ENCODE measurements at regions of chr2 and their contacts with region 1.

Region 1: DNA sequence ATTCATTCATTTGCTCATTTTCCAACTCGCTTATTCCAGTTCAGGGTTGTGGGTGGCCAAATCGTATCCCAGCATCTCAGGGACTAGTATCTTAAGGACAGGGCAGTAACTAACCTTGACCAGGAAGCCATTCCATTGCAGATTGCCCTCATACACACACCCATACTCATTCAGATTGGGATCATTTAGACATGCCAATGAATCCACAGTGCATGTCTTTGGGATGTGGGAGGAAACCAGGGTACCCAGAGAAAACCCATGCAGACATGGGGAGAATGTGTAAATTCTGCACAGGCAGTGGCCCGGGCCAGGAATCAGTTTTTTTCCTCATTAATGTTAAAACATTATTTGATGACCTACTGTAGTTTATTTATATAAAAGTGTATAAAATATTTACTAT is 150.7 kb downstream of the USP34 start:
- DNase-seq: no peak
- H3K4me3 ChIP-seq: no peak overlapping the region
- H3K27ac ChIP-seq: no peak overlapping the region
- H3K4me1 ChIP-seq: no peaks in the 10 kb centered on the region
- CTCF ChIP-seq: no peak

Region 2: GRCh38 chr2:61220768-61221167 is 99.4 kb before region 1 on chr2:
- CTCF ChIA-PET with region 1: no interaction called
- POLR2A ChIA-PET with region 1: interaction called, 6 read pairs
- intact Hi-C with region 1: loop called (anchors 5 kb)
- DNase-seq: no peak
- H3K4me3 ChIP-seq: no peak overlapping the region
- H3K27ac ChIP-seq: no peak overlapping the region
- H3K4me1 ChIP-seq: no peaks in the 10 kb centered on the region
- CTCF ChIP-seq: no peak

Region 3: GRCh38 chr2:61255580-61256437 is 64.4 kb before region 1 on chr2:
- CTCF ChIA-PET with region 1: no interaction called
- POLR2A ChIA-PET with region 1: no interaction called
- intact Hi-C with region 1: no loop called
- DNase-seq: no peak
- H3K4me3 ChIP-seq: no peak overlapping the region
- H3K27ac ChIP-seq: no peak overlapping the region
- H3K4me1 ChIP-seq: no peaks in the 10 kb centered on the region
- CTCF ChIP-seq: no peak

Region 4: GRCh38 chr2:62216616-62217015 is 896.4 kb after region 1 on chr2:
- CTCF ChIA-PET with region 1: no interaction called
- POLR2A ChIA-PET with region 1: no interaction called
- intact Hi-C with region 1: no loop called
- DNase-seq: no peak
- H3K4me3 ChIP-seq: no peak overlapping the region
- H3K27ac ChIP-seq: no peak overlapping the region
- H3K4me1 ChIP-seq: no peaks in the 10 kb centered on the region
- CTCF ChIP-seq: no peak

Measured in OCI-LY7 (cell line).